Colonic mucosa (tissue), 4 donors: ENCODE measurements at regions of chr19 and their contacts with region 1.

Region 1: DNA sequence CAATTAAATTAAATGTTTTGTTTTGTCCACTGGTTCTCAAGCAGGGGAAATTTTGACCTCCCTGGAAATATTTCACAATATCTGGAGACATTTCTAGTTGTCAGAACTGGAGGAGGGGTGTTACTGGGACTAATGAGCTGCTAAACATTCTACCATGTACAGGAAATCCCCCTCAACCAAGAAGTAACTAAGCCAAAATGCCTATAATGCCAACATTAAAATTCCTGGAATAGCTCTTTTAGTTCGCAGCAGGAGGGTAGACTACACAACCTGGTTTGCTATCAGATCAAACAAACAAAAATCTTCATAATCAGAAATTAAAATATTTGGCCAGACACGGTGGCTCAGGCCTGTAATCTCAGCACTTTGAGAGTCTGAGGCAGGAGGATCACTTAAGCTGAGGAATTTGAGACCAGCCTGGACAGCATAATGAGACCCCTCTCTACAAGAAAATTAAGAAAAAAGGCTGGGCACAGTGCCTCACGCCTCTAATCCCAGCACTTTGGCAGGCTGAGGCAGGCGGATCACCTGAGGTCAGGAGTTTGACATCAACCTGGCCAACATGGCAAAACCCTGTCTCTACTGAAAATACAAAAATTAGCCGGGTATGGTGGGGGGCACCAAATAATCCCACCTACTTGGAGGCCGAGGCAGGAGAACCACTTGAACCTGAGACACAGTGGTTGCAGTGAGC is 13.7 kb upstream of the SMARCA4 start:
- DNase-seq: no peak
- H3K4me3 ChIP-seq: no peak overlapping the region
- H3K27ac ChIP-seq: no peak overlapping the region
- H3K4me1 ChIP-seq: peaks cover under 1% of the 10 kb centered on the region
- H3K27me3 ChIP-seq: no peaks in the 10 kb centered on the region
- CTCF ChIP-seq: no peak

Region 2: DNA sequence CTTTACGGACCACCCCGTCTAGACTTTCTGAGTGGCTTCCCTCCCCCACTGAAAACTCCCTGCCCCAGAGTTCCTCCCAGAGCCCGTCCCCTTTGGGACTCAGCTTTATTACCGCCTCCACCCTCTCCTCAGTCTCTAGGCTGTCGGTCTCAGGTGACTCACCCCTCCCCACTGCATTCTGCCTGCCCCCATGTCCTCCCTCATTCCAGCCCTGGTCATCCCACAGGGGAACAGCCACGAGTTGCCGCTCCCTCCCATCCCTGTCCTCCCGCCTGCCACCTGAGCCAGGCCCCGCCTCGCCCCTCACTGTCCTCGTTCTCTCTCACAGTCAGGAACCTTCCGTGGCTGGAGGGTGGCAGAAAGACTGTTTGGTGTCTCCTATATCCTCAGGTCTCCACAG is 71.1 kb after region 1 on chr19:
- intact Hi-C with region 1: loop called (anchors 10 kb)
- DNase-seq: peak; percentile 75
- H3K4me3 ChIP-seq: no peak overlapping the region
- H3K27ac ChIP-seq: no peak overlapping the region
- H3K4me1 ChIP-seq: no peaks in the 10 kb centered on the region
- H3K27me3 ChIP-seq: no peaks in the 10 kb centered on the region
- CTCF ChIP-seq: no peak